B cell (primary cell): ENCODE measurements at regions of chr12 and their contacts with region 1.

Region 1: GRCh38 chr12:7933255-7933729 is 2.7 kb downstream of the SLC2A3 start:
- DNase-seq: peak; percentile 95
- ATAC-seq: peak; percentile 80
- H3K4me3 ChIP-seq: peak overlapping the region; percentile 66 to 100 (median 81)
- H3K4me3 Mint-ChIP-seq: no peak overlapping the region
- H3K27ac ChIP-seq: peak overlapping the region; percentile 82 to 90
- H3K27ac Mint-ChIP-seq: no peak overlapping the region
- H3K4me1 ChIP-seq: peaks cover 23 to 41% of the 10 kb centered on the region in 2 donors
- H3K4me1 Mint-ChIP-seq: peaks cover 4% of the 10 kb centered on the region
- H3K27me3 ChIP-seq: no peaks in the 10 kb centered on the region
- H3K27me3 Mint-ChIP-seq: no peaks in the 10 kb centered on the region
- CTCF ChIP-seq: peak; percentile 78

Region 2: GRCh38 chr12:7970475-7971252 is 37.4 kb after region 1 on chr12:
- CTCF ChIA-PET with region 1: interaction called, 221 read pairs
- POLR2A ChIA-PET with region 1: interaction called, 15 read pairs
- intact Hi-C with region 1: loop called (anchors 2 kb)
- DNase-seq: peak; percentile 90
- ATAC-seq: peak; percentile 90
- H3K4me3 ChIP-seq: peak overlapping the region; percentile 65 to 94 (median 74)
- H3K4me3 Mint-ChIP-seq: peak overlapping the region; percentile 88
- H3K27ac ChIP-seq: peak overlapping the region; percentile 91 to 96
- H3K27ac Mint-ChIP-seq: peak overlapping the region; percentile 93
- H3K4me1 ChIP-seq: peaks cover 26 to 35% of the 10 kb centered on the region in 2 donors
- H3K4me1 Mint-ChIP-seq: peaks cover 26% of the 10 kb centered on the region
- H3K27me3 ChIP-seq: no peaks in the 10 kb centered on the region
- H3K27me3 Mint-ChIP-seq: no peaks in the 10 kb centered on the region
- CTCF ChIP-seq: peak; percentile 24

Region 3: DNA sequence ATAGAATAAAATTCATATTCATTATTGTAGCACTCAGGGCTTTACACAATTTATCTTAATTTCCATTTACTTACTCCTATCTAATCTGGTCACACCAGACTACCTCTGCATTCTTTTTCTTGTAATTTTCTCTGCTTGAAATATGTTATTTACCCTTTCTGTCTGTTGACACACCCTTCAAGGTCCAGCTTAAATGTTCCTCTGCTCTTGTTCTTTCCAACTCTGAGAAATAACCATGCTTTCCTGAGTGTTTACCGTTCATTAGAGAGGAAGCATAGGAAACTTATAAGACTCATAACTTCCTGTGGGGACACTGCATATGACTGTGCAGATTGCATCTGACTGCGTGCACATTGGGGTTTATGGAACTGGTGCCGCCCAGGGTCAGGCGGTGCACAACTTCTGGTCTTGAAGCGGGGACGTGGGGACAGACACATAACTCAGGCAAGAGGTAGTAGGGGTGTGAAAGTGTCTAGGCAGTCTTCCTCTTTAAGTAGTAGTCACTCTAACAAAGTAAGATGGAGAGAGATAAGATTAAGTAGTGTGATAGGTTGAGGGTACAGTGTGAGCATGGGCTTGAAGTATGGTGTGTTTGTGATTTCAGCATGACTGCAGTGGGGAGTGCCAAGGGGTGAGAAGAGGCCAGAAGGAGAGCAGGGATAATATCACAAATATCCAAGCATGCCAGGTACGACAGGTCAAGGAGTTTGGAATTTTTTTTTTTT is 56.7 kb after region 1 on chr12:
- CTCF ChIA-PET with region 1: interaction called, 142 read pairs
- POLR2A ChIA-PET with region 1: interaction called, 15 read pairs
- intact Hi-C with region 1: loop called (anchors 1 kb)
- DNase-seq: no peak
- ATAC-seq: no peak
- H3K4me3 ChIP-seq: no peak overlapping the region
- H3K4me3 Mint-ChIP-seq: no peak overlapping the region
- H3K27ac ChIP-seq: no peak overlapping the region
- H3K27ac Mint-ChIP-seq: no peak overlapping the region
- H3K4me1 ChIP-seq: peaks cover 5 to 8% of the 10 kb centered on the region in 2 donors
- H3K4me1 Mint-ChIP-seq: peaks cover 8% of the 10 kb centered on the region
- H3K27me3 ChIP-seq: no peaks in the 10 kb centered on the region
- H3K27me3 Mint-ChIP-seq: no peaks in the 10 kb centered on the region
- CTCF ChIP-seq: no peak

Region 4: DNA sequence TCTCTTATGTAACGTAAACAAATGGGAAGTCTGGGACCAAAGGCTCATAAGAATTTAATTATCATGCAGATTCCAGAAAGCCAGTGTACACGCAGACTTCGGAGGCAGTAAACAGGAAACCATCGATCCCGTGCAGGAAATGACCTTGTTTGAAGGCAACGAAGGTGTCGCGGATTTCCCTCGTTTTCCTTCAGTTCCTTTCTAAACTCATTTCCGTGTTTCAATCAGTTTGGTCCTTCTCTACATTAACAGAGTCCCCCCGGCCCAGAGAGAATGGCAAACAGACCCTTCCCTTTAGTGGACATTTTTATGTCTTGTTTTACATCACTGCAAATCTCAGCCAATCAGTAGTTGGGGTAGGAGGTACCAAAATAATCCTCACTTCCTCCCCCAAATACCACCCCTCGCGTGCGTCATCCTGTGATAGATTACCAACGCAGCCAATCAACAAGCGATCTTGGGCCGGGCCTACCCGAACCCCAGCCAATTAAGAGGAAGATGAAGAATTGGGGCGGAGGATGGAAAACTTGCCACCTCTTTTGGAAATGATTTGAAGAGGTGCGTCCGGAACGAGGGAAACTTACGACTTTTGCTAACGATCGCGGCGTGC is 93.1 kb after region 1 on chr12:
- CTCF ChIA-PET with region 1: interaction called, 14 read pairs
- POLR2A ChIA-PET with region 1: interaction called, 15 read pairs
- intact Hi-C with region 1: loop called (anchors 1 kb)
- DNase-seq: peak; percentile 98
- ATAC-seq: peak; percentile 95
- H3K4me3 ChIP-seq: peak overlapping the region; percentile 92 to 99 (median 98)
- H3K4me3 Mint-ChIP-seq: peak overlapping the region; percentile 97
- H3K27ac ChIP-seq: peak overlapping the region; percentile 99 to 100
- H3K27ac Mint-ChIP-seq: peak overlapping the region; percentile 100
- H3K4me1 ChIP-seq: peaks cover 4 to 8% of the 10 kb centered on the region in 2 donors
- H3K4me1 Mint-ChIP-seq: peaks cover 11% of the 10 kb centered on the region
- H3K27me3 ChIP-seq: no peaks in the 10 kb centered on the region
- H3K27me3 Mint-ChIP-seq: no peaks in the 10 kb centered on the region
- CTCF ChIP-seq: no peak

Region 5: DNA sequence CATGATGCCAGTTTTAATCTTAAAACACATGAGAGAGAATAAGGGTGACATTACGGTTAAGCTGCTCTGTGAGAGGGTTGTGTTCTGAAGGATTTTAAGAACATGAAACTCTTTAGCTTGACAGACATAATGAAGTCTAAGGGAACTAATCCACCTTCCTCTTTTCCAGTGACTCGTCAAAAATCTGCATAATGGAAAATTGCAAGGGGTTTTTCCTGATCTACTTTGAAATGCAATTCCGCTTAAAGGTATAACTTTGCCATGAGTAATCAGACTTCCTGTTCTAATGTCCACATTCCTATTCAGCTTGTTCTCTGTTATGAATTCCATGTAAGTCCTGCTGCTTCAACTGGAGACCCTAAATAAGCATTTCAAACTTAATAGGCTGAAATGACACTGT is 223.6 kb after region 1 on chr12 and contains the start of gene ZNF705A:
- CTCF ChIA-PET with region 1: no interaction called
- POLR2A ChIA-PET with region 1: no interaction called
- intact Hi-C with region 1: no loop called
- DNase-seq: no peak
- ATAC-seq: no peak
- H3K4me3 ChIP-seq: no peak within 1 kb of the TSS
- H3K4me3 Mint-ChIP-seq: no peak within 1 kb of the TSS
- H3K27ac ChIP-seq: no peak within 1 kb of the TSS
- H3K27ac Mint-ChIP-seq: no peak within 1 kb of the TSS
- H3K4me1 ChIP-seq: no peaks in the 10 kb centered on the region
- H3K4me1 Mint-ChIP-seq: peaks cover 2% of the 10 kb centered on the region
- H3K27me3 ChIP-seq: peaks cover 0 to 5% (median 0%) of the 10 kb centered on the region in 4 experiments
- H3K27me3 Mint-ChIP-seq: peaks cover 22% of the 10 kb centered on the region
- CTCF ChIP-seq: no peak
- total RNA-seq, gene ZNF705A: not detected in 2 replicates